Psoas muscle (tissue), 8 donors: ENCODE measurements at regions of chr7 and their contacts with region 1.

Region 1: GRCh38 chr7:107372298-107372697 is 97.6 kb upstream of the GPR22 start:
- DNase-seq: no peak
- ATAC-seq: peak; percentile 76 to 98 (median 90)
- H3K4me3 ChIP-seq: no peak overlapping the region
- H3K27ac ChIP-seq: peak overlapping the region; percentile 51
- H3K4me1 ChIP-seq: peaks cover 10% of the 10 kb centered on the region
- H3K27me3 ChIP-seq: no peaks in the 10 kb centered on the region
- CTCF ChIP-seq: no peak

Region 2: DNA sequence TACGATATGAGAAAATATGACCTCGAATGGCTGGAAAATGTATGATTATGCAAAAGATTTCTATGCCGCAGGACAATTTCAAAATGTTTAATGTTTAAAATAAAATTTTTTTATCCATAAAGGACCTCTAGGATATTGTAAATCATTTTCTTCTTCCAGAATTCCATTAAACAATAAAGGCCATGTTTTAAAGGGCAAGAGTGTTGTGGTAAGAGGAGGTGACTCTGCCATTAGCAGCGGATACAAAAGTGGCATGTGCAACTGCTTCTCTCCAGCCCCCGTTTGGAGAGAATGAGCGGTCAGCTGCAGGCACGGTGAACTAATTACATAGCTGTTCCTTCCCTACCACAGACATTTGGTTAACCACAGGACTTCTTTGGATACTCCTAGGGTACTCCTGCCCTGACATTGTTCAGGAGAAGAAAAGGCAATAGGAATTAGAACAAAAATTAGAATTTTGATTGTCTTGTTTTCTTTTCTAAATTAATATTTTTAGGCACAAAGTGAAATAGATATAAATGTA is 139.7 kb before region 1 on chr7:
- intact Hi-C with region 1: loop called in 1 of 2 experiments (anchors 10 kb)
- DNase-seq: no peak
- ATAC-seq: peak in 3 of 4 donors; percentile 53 to 61 (median 55)
- H3K4me3 ChIP-seq: no peak overlapping the region
- H3K27ac ChIP-seq: no peak overlapping the region
- H3K4me1 ChIP-seq: peaks cover 10% of the 10 kb centered on the region
- H3K27me3 ChIP-seq: no peaks in the 10 kb centered on the region
- CTCF ChIP-seq: no peak

Region 3: GRCh38 chr7:107286751-107287621 is 85.3 kb before region 1 on chr7:
- intact Hi-C with region 1: loop called in 1 of 2 experiments (anchors 5 kb)
- DNase-seq: no peak
- ATAC-seq: peak in 3 of 4 donors; percentile 17 to 56 (median 40)
- H3K4me3 ChIP-seq: no peak overlapping the region
- H3K27ac ChIP-seq: peak overlapping the region; percentile 57
- H3K4me1 ChIP-seq: peaks cover 22% of the 10 kb centered on the region
- H3K27me3 ChIP-seq: no peaks in the 10 kb centered on the region
- CTCF ChIP-seq: no peak

Region 4: GRCh38 chr7:107318523-107319160 is 53.7 kb before region 1 on chr7:
- intact Hi-C with region 1: no loop called
- DNase-seq: no peak
- ATAC-seq: no peak
- H3K4me3 ChIP-seq: no peak overlapping the region
- H3K27ac ChIP-seq: no peak overlapping the region
- H3K4me1 ChIP-seq: no peaks in the 10 kb centered on the region
- H3K27me3 ChIP-seq: no peaks in the 10 kb centered on the region
- CTCF ChIP-seq: no peak